Heart right ventricle (tissue), 16 donors: ENCODE measurements at regions of chr3 and their contacts with region 1.

Region 1: DNA sequence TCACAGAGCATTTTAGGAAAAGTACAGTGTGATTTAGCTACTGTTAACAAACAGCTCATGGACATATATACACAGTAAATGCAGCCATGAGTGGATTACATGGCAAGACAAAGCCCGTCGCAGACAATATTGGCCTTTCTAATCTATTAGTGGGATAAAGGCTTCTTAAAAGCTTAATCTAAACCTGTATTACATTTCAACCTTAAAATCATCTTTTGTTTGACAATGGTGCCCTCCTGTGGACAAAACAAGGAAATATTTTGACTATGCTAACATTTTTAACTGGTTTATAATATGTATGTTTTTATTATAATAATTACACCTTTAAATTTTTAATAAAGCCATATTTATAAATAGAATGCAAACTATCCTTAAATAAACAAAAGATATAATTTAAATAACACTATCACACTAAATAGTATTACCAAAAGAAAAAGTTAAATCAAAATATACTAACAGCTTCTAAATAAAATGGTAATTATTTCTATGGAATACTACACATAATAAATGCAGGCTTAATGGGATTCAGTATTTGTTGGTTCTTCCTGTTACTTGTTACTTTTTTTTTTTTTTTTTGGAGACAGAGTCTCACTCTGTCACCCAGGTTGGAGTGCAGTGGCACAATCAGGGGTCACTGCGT is 38.6 kb downstream of the TAFA4 start:
- DNase-seq: no peak
- ATAC-seq: no peak
- H3K4me3 ChIP-seq: no peak overlapping the region
- H3K27ac ChIP-seq: no peak overlapping the region
- H3K4me1 ChIP-seq: no peaks in the 10 kb centered on the region
- H3K27me3 ChIP-seq: peaks cover 0 to 36% (median 11%) of the 10 kb centered on the region in 7 donors
- CTCF ChIP-seq: peak; percentile 9 to 67 (median 57)

Region 2: GRCh38 chr3:66938338-66938963 is 1955.3 kb before region 1 on chr3:
- intact Hi-C with region 1: loop called in 3 of 10 experiments (anchors 10 kb)
- DNase-seq: peak in 1 of 2 donors; percentile 17
- ATAC-seq: peak in 5 of 8 donors; percentile 44 to 75 (median 58)
- H3K4me3 ChIP-seq: no peak overlapping the region
- H3K27ac ChIP-seq: no peak overlapping the region
- H3K4me1 ChIP-seq: no peaks in the 10 kb centered on the region
- H3K27me3 ChIP-seq: peaks cover 0 to 52% (median 21%) of the 10 kb centered on the region in 7 donors
- CTCF ChIP-seq: peak; percentile 57 to 76 (median 71)

Region 3: GRCh38 chr3:68943753-68944500 is 50.2 kb after region 1 on chr3:
- intact Hi-C with region 1: no loop called
- DNase-seq: no peak
- ATAC-seq: no peak
- H3K4me3 ChIP-seq: no peak overlapping the region
- H3K27ac ChIP-seq: no peak overlapping the region
- H3K4me1 ChIP-seq: no peaks in the 10 kb centered on the region
- H3K27me3 ChIP-seq: peaks cover 0 to 45% (median 29%) of the 10 kb centered on the region in 7 donors
- CTCF ChIP-seq: no peak

Region 4: DNA sequence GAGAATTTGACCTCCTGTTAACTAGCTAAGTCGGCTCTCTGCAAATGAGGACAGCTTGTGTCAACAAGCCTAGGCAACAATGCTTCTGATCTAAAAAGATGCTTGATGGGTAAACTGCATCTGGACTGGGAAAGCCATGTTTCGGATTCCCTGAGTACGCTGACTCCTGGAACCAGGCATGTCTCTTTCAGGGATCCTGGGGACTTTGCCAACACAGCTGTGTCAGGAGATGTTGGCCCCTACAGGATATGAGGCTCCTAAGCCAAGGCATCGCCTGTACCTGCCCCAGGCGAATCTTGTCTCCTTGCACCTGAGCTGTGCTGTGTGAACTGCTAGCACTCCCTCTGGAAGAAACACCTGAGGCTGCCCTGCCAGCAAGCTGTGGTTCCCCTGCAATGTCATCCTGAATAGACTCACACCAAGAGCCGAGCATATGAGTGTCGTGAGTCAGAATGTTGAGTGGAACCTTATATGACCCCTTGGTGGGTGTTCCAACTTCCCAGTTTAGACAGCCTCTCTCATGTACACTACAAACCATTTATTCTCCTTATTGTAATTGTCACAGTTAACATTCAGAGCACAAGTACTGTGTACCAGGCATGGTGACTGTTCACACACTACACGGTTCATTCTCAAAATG is 102.8 kb after region 1 on chr3:
- intact Hi-C with region 1: no loop called
- DNase-seq: no peak
- ATAC-seq: peak in 7 of 8 donors; percentile 17 to 84 (median 69)
- H3K4me3 ChIP-seq: no peak overlapping the region
- H3K27ac ChIP-seq: no peak overlapping the region
- H3K4me1 ChIP-seq: peaks cover 0 to 25% (median 0%) of the 10 kb centered on the region in 9 donors
- H3K27me3 ChIP-seq: no peaks in the 10 kb centered on the region
- CTCF ChIP-seq: no peak

Region 5: DNA sequence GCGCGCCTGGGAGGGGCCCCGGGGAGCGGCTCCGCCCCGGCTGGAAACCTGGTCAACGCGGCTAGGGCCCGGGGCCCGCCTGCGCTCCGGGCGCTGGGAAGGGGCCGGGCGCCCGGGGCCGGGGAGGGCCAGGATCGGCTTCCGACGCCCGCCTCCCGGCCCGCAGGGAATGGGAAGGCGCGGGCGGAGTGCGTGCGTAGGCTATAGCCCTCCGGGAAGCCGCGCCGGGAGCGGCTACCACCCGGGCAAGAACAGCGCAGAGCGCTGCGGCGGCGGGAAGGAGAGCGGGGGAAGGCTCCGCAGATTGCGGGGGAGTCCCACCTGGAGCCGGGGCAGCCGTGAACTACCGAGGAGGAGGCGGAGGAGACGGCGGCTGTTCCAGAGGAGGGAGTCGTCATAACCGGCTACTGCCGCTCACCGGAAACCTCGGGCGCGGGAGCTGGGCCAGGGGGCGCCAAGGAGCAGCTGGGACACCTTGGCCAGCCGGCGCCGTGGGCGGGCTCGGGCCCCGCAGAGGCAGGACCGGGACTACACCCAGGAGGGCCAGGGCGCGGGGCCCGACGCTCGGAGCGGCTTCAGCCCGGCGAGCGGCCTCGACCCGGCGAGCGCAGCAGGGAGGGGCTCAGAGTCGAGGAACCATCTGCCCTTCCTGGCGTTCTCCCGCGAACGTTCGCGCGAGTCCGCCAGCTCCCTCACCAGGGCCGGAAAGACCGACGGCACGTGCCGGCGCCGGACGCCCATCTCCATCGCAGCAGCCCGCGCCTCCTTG is 119.7 kb after region 1 on chr3 and contains the start of gene EOGT:
- intact Hi-C with region 1: no loop called
- DNase-seq: peak; percentile 91 to 93
- ATAC-seq: peak; percentile 78 to 96 (median 88)
- H3K4me3 ChIP-seq: peak within 1 kb of the TSS; percentile 65 to 96 (median 83)
- H3K27ac ChIP-seq: peak within 1 kb of the TSS; percentile 92 to 100 (median 99)
- H3K4me1 ChIP-seq: peaks cover 0 to 56% (median 44%) of the 10 kb centered on the region in 9 donors
- H3K27me3 ChIP-seq: no peaks in the 10 kb centered on the region
- CTCF ChIP-seq: peak in 8 of 9 donors; percentile 47 to 86 (median 72)
- total RNA-seq, gene EOGT: 27.1 to 48.3 (median 39.8) TPM